Mucosa of descending colon (tissue), 3 donors: ENCODE measurements at regions of chr6 and their contacts with region 1.

Region 1: GRCh38 chr6:144087789-144088426 is 7.5 kb downstream of the SF3B5 start:
- DNase-seq: no peak
- ATAC-seq: peak; percentile 81
- H3K4me3 ChIP-seq: no peak overlapping the region
- H3K4me1 ChIP-seq: no peaks in the 10 kb centered on the region
- CTCF ChIP-seq: no peak

Region 2: DNA sequence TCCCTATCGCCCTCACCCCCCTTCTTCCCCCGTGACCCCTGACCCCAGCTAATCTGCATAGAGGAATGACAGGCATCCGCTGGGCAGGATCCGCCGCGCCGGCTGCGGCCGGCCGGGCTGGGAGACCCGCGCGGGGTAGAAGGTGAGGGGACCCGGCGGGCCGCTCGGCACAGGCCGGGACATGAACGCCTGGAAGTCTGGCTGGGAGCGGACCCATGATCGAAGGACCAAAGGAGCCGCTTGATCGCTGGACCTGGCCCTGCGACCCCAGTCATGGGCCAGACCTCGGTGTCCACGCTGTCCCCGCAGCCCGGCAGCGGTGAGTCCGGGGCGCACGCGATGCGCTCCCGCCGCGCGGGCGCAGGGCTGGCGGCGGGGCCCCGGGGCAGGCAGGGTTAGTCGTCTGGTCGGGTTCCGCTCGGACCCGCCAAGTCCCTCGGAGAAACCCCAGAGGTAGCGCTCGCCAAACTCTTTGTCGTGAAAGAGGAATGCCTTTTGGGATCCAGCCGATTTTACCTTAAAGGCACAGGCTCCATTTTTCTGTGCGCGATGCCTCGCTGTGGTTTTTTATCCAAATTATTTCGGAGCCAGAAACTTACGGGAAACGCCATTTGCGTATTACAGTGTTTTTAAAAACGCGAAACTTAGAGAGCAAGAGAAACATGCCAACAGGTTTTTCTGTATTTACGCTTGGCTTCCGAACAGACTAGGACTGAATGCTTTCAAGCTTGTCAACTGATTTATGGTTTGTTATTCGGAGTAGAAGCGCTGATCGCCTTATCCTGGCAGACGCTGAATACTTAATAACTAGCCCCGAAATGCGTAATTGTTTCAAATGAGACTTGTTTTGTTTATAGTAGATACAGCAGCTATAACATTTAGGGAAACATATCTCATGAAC is 409.8 kb before region 1 on chr6 and contains the start of gene PHACTR2:
- intact Hi-C with region 1: loop called in 1 of 2 experiments (anchors 5 kb)
- DNase-seq: peak; percentile 70 to 76 (median 72)
- ATAC-seq: peak; percentile 83
- H3K4me3 ChIP-seq: peak within 1 kb of the TSS; percentile 46
- H3K4me1 ChIP-seq: peaks cover 7% of the 10 kb centered on the region
- CTCF ChIP-seq: no peak
- total RNA-seq, gene PHACTR2: 49.5 to 70.8 (median 53.4) TPM

Region 3: DNA sequence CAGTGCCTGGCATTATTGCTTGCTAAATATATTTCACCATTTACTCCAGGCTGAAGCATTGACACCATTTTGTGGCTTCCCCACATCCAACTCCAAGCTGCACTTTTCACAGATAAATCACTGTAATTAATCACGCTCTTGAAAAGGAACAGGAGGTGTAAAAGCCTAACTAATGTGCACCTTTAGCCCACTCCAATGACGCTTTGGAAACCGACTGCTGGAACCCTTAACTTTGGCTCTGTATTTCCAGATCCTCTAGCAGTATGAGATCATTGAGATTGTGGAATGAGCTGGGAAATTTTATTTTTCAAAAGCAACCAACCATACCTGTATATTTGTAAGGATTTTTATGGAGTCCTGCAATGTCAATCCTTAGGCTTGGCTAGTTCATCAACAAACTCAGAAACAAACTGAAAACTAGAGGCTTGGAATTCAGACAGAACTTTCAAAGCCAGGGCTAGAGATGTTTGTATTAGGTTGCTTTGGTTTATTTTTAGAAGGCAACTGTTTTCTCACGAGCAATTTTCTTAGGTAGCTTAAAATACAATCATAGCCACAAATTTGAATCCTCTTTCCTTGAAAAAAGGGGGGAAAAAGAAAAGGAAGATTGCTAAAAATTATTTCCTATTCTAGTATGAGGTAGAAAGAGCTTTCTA is 144.4 kb after region 1 on chr6:
- intact Hi-C with region 1: no loop called
- DNase-seq: no peak
- ATAC-seq: no peak
- H3K4me3 ChIP-seq: no peak overlapping the region
- H3K4me1 ChIP-seq: no peaks in the 10 kb centered on the region
- CTCF ChIP-seq: no peak